Activated CD4-positive, alpha-beta memory T cell treated with anti-CD3 and anti-CD28 coated beads, Interleukin-2, amount 10 ng/mL, durations not matched to agents 7 days and 5 days (primary cell): ENCODE measurements at regions of chr9 and their contacts with region 1.

Region 1: GRCh38 chr9:85741095-85741874 is 469 bp downstream of the AGTPBP1 start:
- DNase-seq: peak; percentile 63
- H3K4me3 Mint-ChIP-seq: peak overlapping the region; percentile 80
- H3K27ac Mint-ChIP-seq: peak overlapping the region; percentile 87
- H3K4me1 Mint-ChIP-seq: peaks cover 49% of the 10 kb centered on the region
- H3K27me3 Mint-ChIP-seq: peaks cover 4% of the 10 kb centered on the region

Region 2: DNA sequence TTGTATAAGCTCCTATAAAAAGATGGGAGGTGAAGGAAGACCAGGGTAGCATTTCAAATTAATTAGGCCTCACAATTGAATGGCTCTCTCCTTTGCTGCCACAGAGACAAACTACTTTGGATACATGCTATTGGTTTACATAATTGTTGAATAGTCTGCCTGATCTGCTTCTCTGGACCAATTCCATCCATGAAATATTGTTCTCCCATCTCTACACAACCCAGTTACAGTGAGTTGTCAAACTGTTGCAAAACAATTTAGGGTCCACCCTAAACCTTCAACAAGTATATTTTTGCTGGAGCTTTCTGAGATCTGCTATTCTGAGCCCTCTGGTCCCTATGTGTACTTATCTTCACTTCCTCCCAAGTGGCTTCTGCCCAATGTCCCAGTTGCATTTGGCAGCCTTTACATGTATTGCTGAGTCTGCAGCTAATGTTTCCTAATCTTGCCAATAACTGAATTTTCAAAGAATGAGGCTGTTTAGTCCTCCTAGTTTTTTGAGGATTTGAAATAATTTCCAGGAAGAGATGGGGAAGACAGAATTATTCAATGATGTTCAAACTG is 38.5 kb before region 1 on chr9:
- CTCF ChIA-PET with region 1: interaction called, 15 read pairs
- POLR2A ChIA-PET with region 1: no interaction called
- DNase-seq: no peak
- H3K4me3 Mint-ChIP-seq: no peak overlapping the region
- H3K27ac Mint-ChIP-seq: no peak overlapping the region
- H3K4me1 Mint-ChIP-seq: peaks cover 18% of the 10 kb centered on the region
- H3K27me3 Mint-ChIP-seq: no peaks in the 10 kb centered on the region